Panc1 (cell line): ENCODE measurements at regions of chr17 and their contacts with region 1.

Region 1: DNA sequence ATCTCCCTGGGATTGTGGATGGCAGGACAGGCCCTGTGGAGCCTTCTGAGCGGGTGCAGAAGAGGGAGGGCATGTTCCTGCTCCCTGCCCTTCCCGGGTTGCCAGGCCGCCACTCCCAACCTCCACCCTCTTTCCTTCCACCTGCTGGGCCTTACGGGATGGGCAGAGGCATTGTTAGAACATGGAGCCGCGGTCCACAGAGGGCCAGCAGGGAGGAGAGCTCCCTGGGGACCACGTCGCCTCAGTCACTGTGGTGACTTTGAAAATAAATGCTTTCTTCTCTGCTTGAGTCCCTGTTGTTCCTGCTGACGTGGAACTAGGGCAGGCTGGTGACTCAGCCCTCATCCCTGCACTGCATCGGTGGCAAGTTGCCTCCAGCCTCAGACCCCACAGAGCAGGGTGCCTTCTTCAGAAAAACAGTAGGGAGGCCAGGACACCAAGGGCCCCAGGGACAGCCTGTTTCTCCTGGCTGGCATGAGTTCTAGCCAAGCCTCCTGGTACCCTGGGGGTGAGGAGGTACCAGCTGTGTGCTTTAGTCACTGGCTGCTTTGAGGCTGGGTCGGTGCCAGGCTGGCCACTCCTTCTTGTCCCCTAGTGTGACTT is 224.9 kb downstream of the SEC14L1 start:
- DNase-seq: no peak
- ATAC-seq: peak; percentile 65
- H3K4me3 ChIP-seq: no peak overlapping the region
- H3K27ac ChIP-seq: peak overlapping the region; percentile 82
- H3K4me1 ChIP-seq: peaks cover 76% of the 10 kb centered on the region
- H3K27me3 ChIP-seq: no peaks in the 10 kb centered on the region
- CTCF ChIP-seq: no peak

Region 2: DNA sequence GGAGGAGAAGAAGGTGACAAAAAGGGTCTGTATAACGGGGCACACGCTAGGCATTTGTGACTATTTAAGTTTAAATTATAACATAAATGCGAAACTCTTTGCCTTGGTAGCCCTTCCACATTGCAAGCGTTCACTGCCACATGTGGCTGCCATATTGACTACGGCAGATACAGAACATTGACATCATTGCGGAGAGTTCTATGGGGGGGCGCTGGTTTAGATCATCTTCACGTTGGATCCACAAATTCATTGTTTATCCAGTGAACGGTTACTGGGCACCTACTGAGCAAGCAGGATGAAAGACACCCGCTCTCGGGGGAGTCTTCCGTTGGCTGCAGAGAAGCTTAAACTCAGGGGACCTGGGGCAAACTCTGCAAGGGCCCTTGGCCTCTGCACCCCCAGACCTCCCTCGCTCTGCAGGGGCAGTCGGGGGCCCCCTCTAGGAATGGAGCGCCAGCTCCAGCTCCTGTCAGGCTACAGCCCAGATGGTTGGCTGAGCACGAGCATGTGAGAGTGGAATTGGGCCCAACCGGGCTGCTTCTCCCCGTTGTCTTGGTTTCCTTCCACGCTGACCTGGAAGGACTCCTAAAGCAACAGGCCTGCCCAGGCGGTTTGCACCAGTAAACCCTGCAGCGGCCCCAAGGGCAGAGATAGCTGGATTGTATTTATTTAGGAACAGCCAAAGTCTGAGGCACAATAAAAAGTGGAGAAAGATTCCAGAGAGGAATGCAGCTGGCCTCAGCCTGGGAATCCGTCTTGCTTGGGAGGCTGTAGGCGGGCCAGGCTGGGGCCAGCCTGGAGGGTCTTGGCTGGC is 52.7 kb before region 1 on chr17:
- CTCF ChIA-PET with region 1: no interaction called
- POLR2A ChIA-PET with region 1: no interaction called
- in situ Hi-C with region 1: no loop called
- intact Hi-C with region 1: no loop called
- DNase-seq: no peak
- ATAC-seq: peak; percentile 47
- H3K4me3 ChIP-seq: no peak overlapping the region
- H3K27ac ChIP-seq: peak overlapping the region; percentile 99
- H3K4me1 ChIP-seq: peaks cover 94% of the 10 kb centered on the region
- H3K27me3 ChIP-seq: no peaks in the 10 kb centered on the region
- CTCF ChIP-seq: no peak

Region 3: GRCh38 chr17:77382966-77383612 is 17.4 kb after region 1 on chr17:
- CTCF ChIA-PET with region 1: interaction called, 12 read pairs
- POLR2A ChIA-PET with region 1: no interaction called
- in situ Hi-C with region 1: no loop called
- intact Hi-C with region 1: no loop called
- DNase-seq: no peak
- ATAC-seq: peak; percentile 7; the same call in 1 of the 2 replicates
- H3K4me3 ChIP-seq: no peak overlapping the region
- H3K27ac ChIP-seq: peak overlapping the region; percentile 45; the same call in 1 of the 2 replicates
- H3K4me1 ChIP-seq: peaks cover 96% of the 10 kb centered on the region
- H3K27me3 ChIP-seq: no peaks in the 10 kb centered on the region
- CTCF ChIP-seq: no peak

Region 4: GRCh38 chr17:79126139-79126538 is 1760.5 kb after region 1 on chr17:
- CTCF ChIA-PET with region 1: no interaction called
- POLR2A ChIA-PET with region 1: interaction called, 10 read pairs
- in situ Hi-C with region 1: no loop called
- intact Hi-C with region 1: no loop called
- DNase-seq: no peak
- ATAC-seq: peak; percentile 73
- H3K4me3 ChIP-seq: no peak overlapping the region
- H3K27ac ChIP-seq: no peak overlapping the region
- H3K4me1 ChIP-seq: no peaks in the 10 kb centered on the region; the same call in 1 of the 2 replicates
- H3K27me3 ChIP-seq: peaks cover 8% of the 10 kb centered on the region; the same call in 1 of the 2 replicates
- CTCF ChIP-seq: no peak